Calu3 (cell line): ENCODE measurements at regions of chr2 and their contacts with region 1.

Region 1: DNA sequence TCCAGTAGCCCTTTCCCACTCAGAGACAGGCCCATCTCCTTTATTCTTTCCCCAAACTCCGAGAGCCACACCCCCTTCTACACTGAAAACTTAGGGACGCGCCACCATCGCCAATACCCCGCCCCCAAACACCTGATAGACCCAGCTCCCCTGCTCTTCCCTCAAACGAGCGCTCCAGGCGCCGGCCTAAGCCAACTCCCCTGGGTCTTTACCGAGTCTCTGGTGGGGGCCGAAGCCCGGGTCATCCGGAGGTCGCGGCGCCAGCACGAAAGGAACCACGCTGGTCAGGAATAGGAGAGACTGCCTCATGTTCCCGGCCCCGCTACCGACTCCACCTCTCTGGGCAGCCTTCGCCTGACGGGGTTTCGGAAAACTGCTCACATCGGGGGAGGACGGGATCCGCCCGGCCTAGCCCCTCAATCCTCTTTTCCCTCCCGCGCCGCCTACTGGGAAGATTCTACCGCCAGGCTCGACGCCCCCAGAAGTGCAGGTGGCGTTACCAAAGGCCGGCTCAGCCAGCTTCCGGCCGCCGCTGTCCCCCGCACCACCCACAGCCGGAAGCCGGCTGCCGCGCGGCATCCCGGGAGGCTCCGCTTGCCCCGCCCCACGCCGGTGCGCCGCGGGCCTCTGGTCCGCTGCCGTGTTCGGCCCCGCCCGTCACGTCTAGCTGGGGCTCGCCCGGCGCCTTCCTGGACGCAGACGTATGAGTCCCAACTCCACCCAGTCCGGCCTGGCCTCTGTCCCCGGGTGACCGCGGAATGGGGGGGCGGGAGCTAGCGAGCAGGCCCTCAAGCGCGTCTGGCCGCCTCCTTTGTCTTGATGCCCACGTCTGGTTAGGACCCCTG is at the start of gene ADAM17:
- DNase-seq: peak; percentile 97
- H3K4me3 Mint-ChIP-seq: peak within 1 kb of the TSS; percentile 98
- H3K27ac Mint-ChIP-seq: peak within 1 kb of the TSS; percentile 95
- H3K4me1 Mint-ChIP-seq: peaks cover 30% of the 10 kb centered on the region
- H3K27me3 Mint-ChIP-seq: no peaks in the 10 kb centered on the region
- CTCF ChIP-seq: no peak
- total RNA-seq, gene ADAM17: 53.5 and 54.2 TPM in 2 replicates

Region 2: GRCh38 chr2:8656160-8656641 is 899.3 kb before region 1 on chr2:
- CTCF ChIA-PET with region 1: no interaction called
- intact Hi-C with region 1: no loop called
- DNase-seq: no peak
- H3K4me3 Mint-ChIP-seq: no peak overlapping the region
- H3K27ac Mint-ChIP-seq: no peak overlapping the region
- H3K4me1 Mint-ChIP-seq: peaks cover 13% of the 10 kb centered on the region
- H3K27me3 Mint-ChIP-seq: no peaks in the 10 kb centered on the region
- CTCF ChIP-seq: no peak

Region 3: GRCh38 chr2:9310377-9310776 is 245.1 kb before region 1 on chr2:
- CTCF ChIA-PET with region 1: no interaction called
- intact Hi-C with region 1: no loop called
- DNase-seq: peak; percentile 51
- H3K4me3 Mint-ChIP-seq: peak overlapping the region; percentile 26
- H3K27ac Mint-ChIP-seq: peak overlapping the region; percentile 77
- H3K4me1 Mint-ChIP-seq: peaks cover 65% of the 10 kb centered on the region
- H3K27me3 Mint-ChIP-seq: no peaks in the 10 kb centered on the region
- CTCF ChIP-seq: no peak

Region 4: GRCh38 chr2:9518163-9518562 is 37.4 kb before region 1 on chr2:
- CTCF ChIA-PET with region 1: no interaction called
- intact Hi-C with region 1: loop called (anchors 1 kb)
- DNase-seq: no peak
- H3K4me3 Mint-ChIP-seq: no peak overlapping the region
- H3K27ac Mint-ChIP-seq: no peak overlapping the region
- H3K4me1 Mint-ChIP-seq: no peaks in the 10 kb centered on the region
- H3K27me3 Mint-ChIP-seq: no peaks in the 10 kb centered on the region
- CTCF ChIP-seq: no peak